Mammary epithelial cell (primary cell): ENCODE measurements at regions of chr21 and their contacts with region 1.

Region 1: DNA sequence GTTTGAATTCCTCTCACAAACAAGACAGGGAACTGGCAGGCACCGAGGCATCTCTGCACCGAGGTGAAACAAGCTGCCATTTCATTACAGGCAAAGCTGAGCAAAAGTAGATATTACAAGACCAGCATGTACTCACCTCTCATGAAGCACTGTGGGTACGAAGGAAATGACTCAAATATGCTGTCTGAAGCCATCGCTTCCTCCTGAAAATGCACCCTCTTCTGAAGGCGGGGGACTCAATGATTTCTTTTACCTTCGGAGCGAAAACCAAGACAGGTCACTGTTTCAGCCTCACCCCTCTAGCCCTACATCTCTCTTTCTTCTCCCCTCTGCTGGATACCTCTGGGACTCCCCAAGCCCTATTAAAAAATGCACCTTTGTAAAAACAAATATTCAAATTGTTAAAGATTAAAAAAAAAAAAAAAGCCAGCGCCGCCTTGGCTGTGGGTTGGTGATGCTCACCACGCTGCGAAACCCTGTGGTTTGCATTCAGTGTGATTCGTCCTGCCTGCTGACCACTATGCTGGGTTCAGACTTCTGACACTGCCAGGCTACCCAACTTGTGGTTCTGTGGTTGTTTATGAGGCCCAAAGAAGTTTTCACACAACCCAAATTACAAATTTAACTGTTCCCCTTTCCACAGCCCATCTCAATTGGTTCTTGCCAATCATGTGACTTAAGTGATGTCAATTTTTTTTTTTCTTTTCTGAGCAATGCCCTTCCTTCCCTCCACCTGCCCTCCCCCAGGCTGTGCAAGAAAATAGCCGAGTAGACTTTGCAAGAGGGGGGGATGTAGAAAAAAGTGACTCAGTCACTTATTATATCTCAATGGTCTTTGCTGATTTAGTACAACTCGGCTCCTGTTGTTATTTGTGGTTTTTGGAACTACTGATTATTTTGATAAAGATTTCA is at the start of gene RUNX1:
- DNase-seq: peak; percentile 91
- H3K4me3 ChIP-seq: peak within 1 kb of the TSS; percentile 13 to 35 (median 34)
- H3K27ac ChIP-seq: peak within 1 kb of the TSS; percentile 90
- H3K4me1 ChIP-seq: peaks cover 32% of the 10 kb centered on the region
- H3K27me3 ChIP-seq: no peaks in the 10 kb centered on the region
- CTCF ChIP-seq: no peak
- total RNA-seq, gene RUNX1: 126 to 133 TPM

Region 2: GRCh38 chr21:34983680-34984086 is 65.3 kb before region 1 on chr21:
- CTCF ChIA-PET with region 1: no interaction called
- dilution Hi-C with region 1: no loop called
- in situ Hi-C with region 1: no loop called
- intact Hi-C with region 1: loop called (anchors 5 kb)
- DNase-seq: peak; percentile 73
- H3K4me3 ChIP-seq: no peak overlapping the region
- H3K27ac ChIP-seq: peak overlapping the region; percentile 72
- H3K4me1 ChIP-seq: peaks cover 33% of the 10 kb centered on the region
- H3K27me3 ChIP-seq: no peaks in the 10 kb centered on the region
- CTCF ChIP-seq: no peak

Region 3: DNA sequence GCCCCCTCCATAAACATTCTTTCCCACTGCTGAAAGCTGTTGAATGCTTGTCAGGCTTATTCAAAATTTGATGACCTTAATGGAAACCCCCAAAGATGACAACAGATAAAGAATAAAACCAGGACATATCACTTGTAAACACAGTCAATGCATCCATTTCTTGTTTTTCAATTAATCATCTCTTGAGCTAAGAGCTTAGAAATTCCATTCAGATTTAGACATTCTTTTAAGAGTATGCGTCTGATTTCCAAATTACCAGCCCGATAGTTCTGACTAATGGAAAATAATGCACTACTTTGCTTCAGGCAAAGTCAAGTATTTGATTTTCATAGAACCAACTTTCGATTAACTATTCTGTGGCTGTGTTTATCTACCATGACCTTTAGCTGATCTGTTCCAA is 100.7 kb after region 1 on chr21:
- CTCF ChIA-PET with region 1: no interaction called
- dilution Hi-C with region 1: no loop called
- in situ Hi-C with region 1: no loop called
- intact Hi-C with region 1: loop called (anchors 1 kb)
- DNase-seq: peak; percentile 84
- H3K4me3 ChIP-seq: no peak overlapping the region
- H3K27ac ChIP-seq: peak overlapping the region; percentile 99
- H3K4me1 ChIP-seq: peaks cover 69% of the 10 kb centered on the region
- H3K27me3 ChIP-seq: no peaks in the 10 kb centered on the region
- CTCF ChIP-seq: no peak

Region 4: GRCh38 chr21:35198031-35198431 is 149.1 kb after region 1 on chr21:
- CTCF ChIA-PET with region 1: no interaction called
- dilution Hi-C with region 1: no loop called
- in situ Hi-C with region 1: no loop called
- intact Hi-C with region 1: loop called (anchors 1 kb)
- DNase-seq: peak; percentile 99
- H3K4me3 ChIP-seq: no peak overlapping the region
- H3K27ac ChIP-seq: peak overlapping the region; percentile 96
- H3K4me1 ChIP-seq: peaks cover 23% of the 10 kb centered on the region
- H3K27me3 ChIP-seq: no peaks in the 10 kb centered on the region
- CTCF ChIP-seq: no peak

Region 5: DNA sequence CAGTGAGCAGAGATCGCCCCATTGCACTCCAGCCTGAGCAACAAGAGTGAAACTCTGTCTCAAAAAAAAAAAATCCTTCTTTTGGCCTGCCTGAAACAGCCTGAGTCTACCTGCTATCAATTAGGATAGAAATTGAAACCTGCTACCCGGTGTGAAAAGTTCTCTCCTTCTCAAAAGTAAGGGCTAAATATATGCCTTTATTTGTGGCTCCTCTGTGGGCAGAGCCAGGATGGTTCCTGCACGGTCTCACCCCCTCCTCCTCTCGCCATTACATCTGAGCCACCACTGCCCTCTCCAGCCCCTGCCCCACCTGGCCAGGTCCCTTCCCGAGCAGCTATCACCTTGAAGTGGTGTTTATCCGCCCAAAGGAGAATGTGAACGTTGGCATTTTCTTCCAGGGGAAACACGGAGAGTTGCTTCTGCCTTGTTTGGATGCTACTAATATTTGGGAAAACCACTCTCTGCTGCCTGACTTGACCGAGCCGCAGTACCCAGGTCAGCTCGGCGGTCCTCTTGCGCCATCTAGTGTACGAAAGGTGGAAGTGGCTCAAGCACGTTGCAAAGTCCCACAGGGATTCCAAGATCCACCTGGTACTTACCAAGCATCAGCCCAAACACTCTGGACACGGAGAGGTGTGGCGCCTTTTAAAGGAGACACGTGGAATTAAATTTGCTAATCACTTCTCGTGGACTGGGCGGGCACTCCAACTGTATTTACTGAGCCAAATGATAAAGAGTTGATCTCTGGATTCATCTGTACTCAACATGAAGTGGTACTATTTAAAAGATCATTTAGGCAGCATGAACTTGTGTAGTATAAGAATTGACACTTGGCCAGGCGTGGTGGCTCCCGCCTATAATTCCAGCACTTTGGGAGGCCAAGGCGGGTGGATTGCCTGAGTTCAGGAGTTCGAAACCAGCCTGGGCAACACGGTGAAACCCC is 979.4 kb after region 1 on chr21:
- CTCF ChIA-PET with region 1: no interaction called
- dilution Hi-C with region 1: no loop called
- in situ Hi-C with region 1: no loop called
- intact Hi-C with region 1: loop called (anchors 10 kb)
- DNase-seq: peak; percentile 70
- H3K4me3 ChIP-seq: no peak overlapping the region
- H3K27ac ChIP-seq: no peak overlapping the region
- H3K4me1 ChIP-seq: peaks cover 11% of the 10 kb centered on the region
- H3K27me3 ChIP-seq: no peaks in the 10 kb centered on the region
- CTCF ChIP-seq: peak; percentile 96 to 97